ENCODE measurements at regions of chr3 and their contacts with region 1.

Region 1: DNA sequence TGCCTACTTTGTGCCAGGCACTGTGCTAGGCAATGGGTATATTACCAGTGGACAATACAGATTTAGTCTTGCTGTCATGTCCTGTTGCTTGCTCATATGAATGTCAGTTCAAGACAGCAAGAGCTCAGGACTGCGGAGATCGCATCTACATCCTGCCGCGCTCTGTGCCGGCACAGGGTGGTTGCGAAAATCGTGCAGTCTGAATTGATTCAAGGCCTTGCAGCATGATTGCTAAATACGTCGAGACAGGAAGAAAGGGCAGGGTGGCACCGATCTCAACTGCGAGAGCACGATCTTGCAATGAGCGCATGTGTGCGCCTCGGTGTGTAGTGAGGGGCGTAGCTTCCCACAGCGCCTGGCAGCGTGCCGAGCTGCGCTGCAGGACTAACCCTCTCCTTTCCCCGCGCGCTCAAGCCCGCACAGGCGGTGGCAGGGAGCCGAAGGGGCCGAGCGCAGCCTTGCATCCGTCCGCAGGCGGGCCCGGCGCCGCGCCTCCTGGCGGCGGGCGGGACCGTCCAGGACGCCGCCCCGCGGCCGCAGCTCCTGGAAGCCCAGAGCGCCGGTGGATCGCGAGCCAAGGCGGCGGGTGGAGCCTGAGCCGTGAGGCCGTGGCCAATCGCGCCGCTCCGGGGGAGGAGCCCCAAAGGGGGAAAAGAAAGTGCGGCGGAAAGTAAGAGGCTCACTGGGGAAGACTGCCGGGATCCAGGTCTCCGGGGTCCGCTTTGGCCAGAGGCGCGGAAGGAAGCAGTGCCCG is at the start of gene IL1RAP:
- DNase-seq: peak; percentile 87
- H3K4me3 Mint-ChIP-seq: peak within 1 kb of the TSS; percentile 77
- H3K27ac Mint-ChIP-seq: peak within 1 kb of the TSS; percentile 76
- H3K4me1 Mint-ChIP-seq: peaks cover 30% of the 10 kb centered on the region
- H3K27me3 Mint-ChIP-seq: no peaks in the 10 kb centered on the region
- total RNA-seq, gene IL1RAP: 11.0 to 13.7 TPM

Region 2: GRCh38 chr3:189304446-189305351 is 1208.9 kb before region 1 on chr3:
- CTCF ChIA-PET with region 1: no interaction called
- intact Hi-C with region 1: loop called (anchors 10 kb)
- DNase-seq: peak; percentile 59
- H3K4me3 Mint-ChIP-seq: peak overlapping the region; percentile 17
- H3K27ac Mint-ChIP-seq: peak overlapping the region; percentile 68
- H3K4me1 Mint-ChIP-seq: peaks cover 57% of the 10 kb centered on the region
- H3K27me3 Mint-ChIP-seq: no peaks in the 10 kb centered on the region

Region 3: DNA sequence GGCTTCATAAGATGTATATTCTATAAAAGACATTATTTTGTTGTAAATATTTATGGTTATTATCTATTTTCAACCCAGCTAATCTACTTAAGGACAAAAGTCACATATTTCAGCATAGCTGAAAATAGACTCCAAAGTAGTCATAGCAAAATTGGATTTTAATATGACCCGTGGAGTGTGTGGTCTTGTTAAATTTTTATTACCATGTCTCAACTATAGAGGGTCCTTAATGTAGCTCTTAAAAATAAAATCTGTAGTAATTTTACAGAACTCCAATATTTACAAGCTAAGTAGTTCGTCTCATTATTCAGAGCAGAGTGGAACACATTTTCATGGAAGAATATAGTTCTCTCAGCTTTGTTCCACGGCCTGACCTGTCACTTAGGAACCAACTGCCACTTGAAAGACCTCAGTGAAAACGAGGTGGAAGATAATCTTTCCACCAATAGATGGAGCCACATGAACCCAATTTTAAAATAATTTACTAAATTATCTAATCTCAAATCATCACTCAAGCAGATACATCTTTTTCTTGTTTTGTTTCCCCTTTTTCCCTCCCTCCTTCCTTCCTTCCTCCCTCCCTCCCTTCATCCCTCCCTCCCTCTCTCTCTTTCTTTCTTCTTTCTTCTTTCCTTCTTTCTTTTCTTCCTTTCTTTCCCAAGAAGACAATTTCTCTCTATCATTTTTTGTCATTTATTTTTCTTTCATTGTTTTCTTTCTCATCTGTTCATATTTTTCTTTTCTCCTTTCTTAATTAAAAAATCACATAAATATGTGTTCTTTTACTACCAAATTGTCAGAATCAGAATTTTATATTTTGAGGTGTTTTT is 288.5 kb before region 1 on chr3:
- CTCF ChIA-PET with region 1: no interaction called
- intact Hi-C with region 1: loop called (anchors 10 kb)
- DNase-seq: no peak
- H3K4me3 Mint-ChIP-seq: no peak overlapping the region
- H3K27ac Mint-ChIP-seq: no peak overlapping the region
- H3K4me1 Mint-ChIP-seq: no peaks in the 10 kb centered on the region
- H3K27me3 Mint-ChIP-seq: peaks cover 2% of the 10 kb centered on the region

Region 4: GRCh38 chr3:190491533-190492054 is 22.0 kb before region 1 on chr3:
- CTCF ChIA-PET with region 1: interaction called, 3 read pairs
- intact Hi-C with region 1: loop called (anchors 1 kb)
- DNase-seq: peak; percentile 30
- H3K4me3 Mint-ChIP-seq: no peak overlapping the region
- H3K27ac Mint-ChIP-seq: no peak overlapping the region
- H3K4me1 Mint-ChIP-seq: peaks cover 24% of the 10 kb centered on the region
- H3K27me3 Mint-ChIP-seq: peaks cover 46% of the 10 kb centered on the region

Region 5: DNA sequence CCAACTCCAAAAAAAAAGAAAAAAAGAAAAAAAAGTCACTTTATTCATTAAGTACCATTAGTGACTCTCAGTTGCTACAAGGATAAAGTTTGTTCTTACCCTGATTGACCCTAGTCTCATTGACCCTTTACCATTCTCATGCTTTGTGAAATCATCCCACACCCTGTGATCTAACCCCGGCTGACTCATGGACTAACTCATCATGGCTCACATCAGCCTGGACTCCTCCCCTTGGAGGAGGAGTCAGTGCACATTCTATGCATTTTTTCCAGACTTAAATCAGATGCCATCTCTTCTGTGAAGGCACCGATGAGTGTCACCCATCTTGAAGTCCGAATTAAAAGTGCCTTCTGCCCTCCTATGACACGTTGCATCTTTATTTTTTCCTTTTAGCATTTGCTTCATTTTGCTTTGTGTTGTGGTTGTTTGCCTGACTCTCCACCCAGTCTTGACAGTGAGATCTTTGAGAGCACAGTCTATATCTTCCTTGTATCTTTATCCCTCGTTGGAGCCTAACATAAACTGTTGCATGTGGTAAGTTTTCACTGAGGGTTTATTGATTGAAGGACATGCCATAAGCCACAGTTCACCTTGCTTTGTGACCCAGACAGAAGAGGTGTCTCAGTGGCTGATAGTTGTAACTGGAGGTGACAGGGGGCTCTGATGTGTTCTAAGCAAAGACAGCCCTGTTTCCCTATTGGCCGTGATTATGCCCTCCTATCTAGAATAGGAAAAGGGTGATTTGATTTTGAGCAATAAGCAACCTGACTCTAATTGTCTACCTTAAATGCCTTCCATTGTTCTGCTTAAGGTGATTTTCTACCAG is 72.4 kb after region 1 on chr3:
- CTCF ChIA-PET with region 1: no interaction called
- intact Hi-C with region 1: loop called (anchors 1 kb)
- DNase-seq: peak; percentile 78
- H3K4me3 Mint-ChIP-seq: peak overlapping the region; percentile 50
- H3K27ac Mint-ChIP-seq: peak overlapping the region; percentile 88
- H3K4me1 Mint-ChIP-seq: peaks cover 37% of the 10 kb centered on the region
- H3K27me3 Mint-ChIP-seq: no peaks in the 10 kb centered on the region

Region 6: GRCh38 chr3:190926619-190927018 is 413.0 kb after region 1 on chr3:
- CTCF ChIA-PET with region 1: no interaction called
- intact Hi-C with region 1: no loop called
- DNase-seq: no peak
- H3K4me3 Mint-ChIP-seq: no peak overlapping the region
- H3K27ac Mint-ChIP-seq: no peak overlapping the region
- H3K4me1 Mint-ChIP-seq: no peaks in the 10 kb centered on the region
- H3K27me3 Mint-ChIP-seq: no peaks in the 10 kb centered on the region

Measured in activated naive CD4-positive, alpha-beta T cell treated with anti-CD3 and anti-CD28 coated beads for 36 hours (primary cell).